Activated CD4-positive, alpha-beta memory T cell treated with anti-CD3 and anti-CD28 coated beads for 36 hours (primary cell): ENCODE measurements at regions of chr12 and their contacts with region 1.

Region 1: DNA sequence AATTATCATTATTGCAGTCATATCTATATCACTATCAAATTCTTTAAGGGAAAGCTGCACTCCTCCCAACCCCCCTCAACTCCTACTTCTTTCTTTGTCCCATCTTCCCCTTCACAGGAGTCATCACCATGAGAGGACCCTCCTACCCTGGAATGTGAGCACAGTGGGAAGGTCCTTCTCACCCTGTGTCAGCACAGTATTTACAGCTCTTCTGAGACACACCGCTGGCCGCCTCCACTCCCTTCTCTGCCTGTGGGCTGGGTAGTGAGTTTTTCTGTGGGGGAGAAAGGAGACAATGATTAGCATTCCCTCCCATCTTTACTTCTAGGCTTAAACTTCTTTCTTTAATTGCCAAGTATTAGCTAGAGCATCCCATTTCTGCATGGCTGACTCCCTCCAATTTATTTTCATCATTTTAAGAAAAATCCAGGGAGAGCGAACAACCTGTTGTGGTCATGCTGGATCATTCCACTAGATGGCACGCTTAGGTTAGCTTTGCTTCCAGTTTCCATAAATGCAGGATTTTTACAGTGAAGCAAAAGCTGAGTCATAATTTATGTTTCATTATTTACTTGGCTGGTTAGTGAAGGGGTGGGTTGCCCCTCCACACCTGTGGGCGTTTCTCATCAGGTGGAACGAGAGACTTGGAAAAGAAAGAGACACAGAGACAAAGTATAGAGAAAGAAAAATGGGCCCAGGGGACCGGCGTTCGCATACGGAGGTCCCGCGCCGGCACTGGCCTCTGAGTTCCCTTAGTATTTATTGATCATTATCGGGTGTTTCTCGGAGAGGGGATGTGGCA is 188.5 kb downstream of the ALX1 start:
- DNase-seq: peak; percentile 31
- H3K4me3 Mint-ChIP-seq: peak overlapping the region; percentile 52
- H3K27ac Mint-ChIP-seq: no peak overlapping the region
- H3K4me1 Mint-ChIP-seq: peaks cover 6% of the 10 kb centered on the region
- H3K27me3 Mint-ChIP-seq: peaks cover 3% of the 10 kb centered on the region

Region 2: DNA sequence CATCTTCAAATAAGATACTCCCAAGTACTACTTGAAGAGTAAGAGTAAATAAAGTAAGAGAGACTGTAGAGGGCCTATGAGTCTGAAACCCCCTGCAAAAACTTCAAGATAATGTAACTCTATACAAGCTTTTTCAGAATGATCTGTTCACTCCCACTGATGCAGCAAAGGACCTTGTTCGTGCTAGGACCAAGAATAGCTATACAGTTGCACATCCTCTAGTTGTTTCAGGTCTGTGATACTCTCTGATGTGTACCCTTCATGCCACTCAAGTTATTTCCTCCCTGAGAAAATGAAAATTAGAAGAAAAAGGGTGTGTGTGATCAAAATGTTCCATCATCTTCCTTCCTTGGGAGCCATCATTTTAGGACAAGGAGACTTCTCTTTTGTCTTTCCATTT is 15.8 kb after region 1 on chr12:
- CTCF ChIA-PET with region 1: no interaction called
- POLR2A ChIA-PET with region 1: no interaction called
- intact Hi-C with region 1: no loop called
- DNase-seq: no peak
- H3K4me3 Mint-ChIP-seq: no peak overlapping the region
- H3K27ac Mint-ChIP-seq: no peak overlapping the region
- H3K4me1 Mint-ChIP-seq: no peaks in the 10 kb centered on the region
- H3K27me3 Mint-ChIP-seq: no peaks in the 10 kb centered on the region

Region 3: GRCh38 chr12:85708775-85709174 is 240.2 kb after region 1 on chr12:
- CTCF ChIA-PET with region 1: no interaction called
- POLR2A ChIA-PET with region 1: no interaction called
- intact Hi-C with region 1: no loop called
- DNase-seq: no peak
- H3K4me3 Mint-ChIP-seq: no peak overlapping the region
- H3K27ac Mint-ChIP-seq: no peak overlapping the region
- H3K4me1 Mint-ChIP-seq: no peaks in the 10 kb centered on the region
- H3K27me3 Mint-ChIP-seq: no peaks in the 10 kb centered on the region

Region 4: DNA sequence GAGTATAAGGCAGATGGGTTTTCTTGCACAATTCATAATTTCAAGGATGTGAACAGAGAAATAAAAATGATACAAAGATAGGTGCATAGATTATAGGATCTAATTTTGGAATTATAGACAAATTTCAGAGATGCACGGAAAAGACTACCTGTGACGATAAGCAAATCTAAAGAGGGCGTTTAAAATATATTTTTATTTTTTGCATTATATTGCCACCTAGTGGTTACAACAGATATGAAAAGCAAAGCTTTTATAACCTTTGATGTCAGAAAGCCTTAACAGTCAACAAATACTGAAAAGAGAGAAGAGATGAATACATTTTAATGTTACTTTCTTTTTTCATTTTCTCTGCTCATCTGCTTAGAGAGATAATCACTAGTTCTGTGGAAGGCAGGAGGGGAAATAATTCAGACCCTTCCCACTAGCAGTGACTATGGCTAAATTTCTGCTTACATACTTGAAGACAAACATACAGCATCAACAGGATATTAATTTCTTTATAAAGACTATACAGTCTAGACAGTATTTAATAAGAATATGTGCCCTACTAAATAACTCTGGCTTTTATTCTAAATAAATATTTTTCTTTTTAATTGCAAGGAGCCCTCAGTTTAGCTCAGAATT is 451.9 kb after region 1 on chr12:
- CTCF ChIA-PET with region 1: interaction called, 8 read pairs
- POLR2A ChIA-PET with region 1: no interaction called
- intact Hi-C with region 1: loop called (anchors 1 kb)
- DNase-seq: no peak
- H3K4me3 Mint-ChIP-seq: no peak overlapping the region
- H3K27ac Mint-ChIP-seq: no peak overlapping the region
- H3K4me1 Mint-ChIP-seq: no peaks in the 10 kb centered on the region
- H3K27me3 Mint-ChIP-seq: no peaks in the 10 kb centered on the region